IMR-90 (cell line): ENCODE measurements at regions of chr5 and their contacts with region 1.

Region 1: GRCh38 chr5:9544502-9545135 is 1.3 kb downstream of the SEMA5A start:
- DNase-seq: peak; percentile 80
- ATAC-seq: peak; percentile 48
- H3K4me3 ChIP-seq: peak overlapping the region; percentile 73
- H3K27ac ChIP-seq: peak overlapping the region; percentile 35
- H3K4me1 ChIP-seq: peaks cover 4% of the 10 kb centered on the region
- H3K27me3 ChIP-seq: no peaks in the 10 kb centered on the region
- CTCF ChIP-seq: peak; percentile 96
- POLR2A ChIP-seq: 0 out of 2 replicates have a peak, but pooled peaks have one; percentile 42
- RAD21 ChIP-seq: peak; percentile 91

Region 2: DNA sequence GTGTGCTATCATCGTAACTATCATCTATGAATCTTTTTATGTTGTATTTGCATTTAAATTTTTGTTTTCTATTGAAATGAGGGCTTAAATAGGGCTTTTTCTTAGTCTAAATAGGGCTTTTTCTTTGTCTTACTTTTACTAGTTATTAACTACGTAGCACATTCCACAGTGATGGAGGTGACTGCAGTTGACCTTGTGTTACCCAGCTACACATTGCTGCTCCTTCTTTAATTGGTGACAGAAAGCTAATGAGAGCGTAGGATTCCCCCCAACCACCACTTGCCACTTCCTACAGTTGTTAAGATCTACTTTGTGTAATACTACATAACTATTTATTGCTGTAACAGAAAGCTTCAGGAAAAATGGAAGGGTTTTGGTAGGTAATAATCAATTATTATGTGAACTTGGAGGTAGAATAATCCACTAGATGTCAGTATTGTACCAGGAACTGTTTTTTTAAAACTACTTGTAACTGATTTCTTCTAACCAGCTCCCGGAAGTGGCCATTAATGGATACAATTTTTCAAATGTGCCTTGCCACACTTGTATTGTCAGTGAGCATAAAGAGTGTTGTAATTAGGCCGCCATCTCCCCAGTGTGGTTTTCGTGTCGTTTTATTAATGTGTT is 1657.7 kb before region 1 on chr5:
- CTCF ChIA-PET with region 1: no interaction called
- POLR2A ChIA-PET with region 1: no interaction called
- dilution Hi-C with region 1: no loop called
- in situ Hi-C with region 1: loop called (anchors 25 kb)
- intact Hi-C with region 1: no loop called
- DNase-seq: peak; percentile 72
- ATAC-seq: peak; percentile 76
- H3K4me3 ChIP-seq: no peak overlapping the region
- H3K27ac ChIP-seq: peak overlapping the region; percentile 40; the same call in 1 of the 2 replicates
- H3K4me1 ChIP-seq: peaks cover 4% of the 10 kb centered on the region
- H3K27me3 ChIP-seq: no peaks in the 10 kb centered on the region
- CTCF ChIP-seq: peak; percentile 72
- POLR2A ChIP-seq: no peak
- RAD21 ChIP-seq: peak; percentile 73

Region 3: GRCh38 chr5:8756498-8757084 is 788.0 kb before region 1 on chr5:
- CTCF ChIA-PET with region 1: no interaction called
- POLR2A ChIA-PET with region 1: no interaction called
- dilution Hi-C with region 1: no loop called
- in situ Hi-C with region 1: loop called (anchors 25 kb)
- intact Hi-C with region 1: loop called (anchors 5 kb)
- DNase-seq: peak; percentile 60
- ATAC-seq: peak; percentile 63; the same call in 1 of the 2 replicates
- H3K4me3 ChIP-seq: no peak overlapping the region
- H3K27ac ChIP-seq: no peak overlapping the region
- H3K4me1 ChIP-seq: peaks cover 2% of the 10 kb centered on the region; the same call in 1 of the 2 replicates
- H3K27me3 ChIP-seq: no peaks in the 10 kb centered on the region
- CTCF ChIP-seq: peak; percentile 59
- POLR2A ChIP-seq: no peak
- RAD21 ChIP-seq: peak; percentile 81

Region 4: GRCh38 chr5:9015260-9015936 is 529.2 kb before region 1 on chr5:
- CTCF ChIA-PET with region 1: no interaction called
- POLR2A ChIA-PET with region 1: no interaction called
- dilution Hi-C with region 1: no loop called
- in situ Hi-C with region 1: no loop called
- intact Hi-C with region 1: no loop called
- DNase-seq: peak; percentile 44
- ATAC-seq: peak; percentile 54
- H3K4me3 ChIP-seq: no peak overlapping the region
- H3K27ac ChIP-seq: peak overlapping the region; percentile 9; the same call in 1 of the 2 replicates
- H3K4me1 ChIP-seq: peaks cover 17% of the 10 kb centered on the region
- H3K27me3 ChIP-seq: no peaks in the 10 kb centered on the region
- CTCF ChIP-seq: no peak
- POLR2A ChIP-seq: no peak
- RAD21 ChIP-seq: no peak

Region 5: GRCh38 chr5:9207817-9208418 is 336.7 kb before region 1 on chr5:
- CTCF ChIA-PET with region 1: no interaction called
- POLR2A ChIA-PET with region 1: no interaction called
- dilution Hi-C with region 1: no loop called
- in situ Hi-C with region 1: no loop called
- intact Hi-C with region 1: loop called (anchors 1 kb)
- DNase-seq: peak; percentile 69
- ATAC-seq: peak; percentile 86
- H3K4me3 ChIP-seq: no peak overlapping the region
- H3K27ac ChIP-seq: no peak overlapping the region
- H3K4me1 ChIP-seq: peaks cover 4% of the 10 kb centered on the region; the same call in 1 of the 2 replicates
- H3K27me3 ChIP-seq: no peaks in the 10 kb centered on the region
- CTCF ChIP-seq: peak; percentile 69
- POLR2A ChIP-seq: no peak; the same call in 1 of the 2 replicates
- RAD21 ChIP-seq: peak; percentile 87

Region 6: GRCh38 chr5:9226016-9226536 is 318.5 kb before region 1 on chr5:
- CTCF ChIA-PET with region 1: no interaction called
- POLR2A ChIA-PET with region 1: no interaction called
- dilution Hi-C with region 1: no loop called
- in situ Hi-C with region 1: no loop called
- intact Hi-C with region 1: no loop called
- DNase-seq: no peak
- ATAC-seq: no peak
- H3K4me3 ChIP-seq: no peak overlapping the region
- H3K27ac ChIP-seq: no peak overlapping the region
- H3K4me1 ChIP-seq: no peaks in the 10 kb centered on the region
- H3K27me3 ChIP-seq: no peaks in the 10 kb centered on the region
- CTCF ChIP-seq: no peak
- POLR2A ChIP-seq: no peak
- RAD21 ChIP-seq: no peak

Region 7: GRCh38 chr5:9573796-9574195 is 29.2 kb after region 1 on chr5:
- CTCF ChIA-PET with region 1: no interaction called
- POLR2A ChIA-PET with region 1: no interaction called
- dilution Hi-C with region 1: no loop called
- in situ Hi-C with region 1: no loop called
- intact Hi-C with region 1: no loop called
- DNase-seq: no peak
- ATAC-seq: no peak
- H3K4me3 ChIP-seq: no peak overlapping the region
- H3K27ac ChIP-seq: no peak overlapping the region
- H3K4me1 ChIP-seq: no peaks in the 10 kb centered on the region
- H3K27me3 ChIP-seq: no peaks in the 10 kb centered on the region
- CTCF ChIP-seq: no peak
- POLR2A ChIP-seq: no peak
- RAD21 ChIP-seq: no peak

Region 8: GRCh38 chr5:9716838-9717281 is 172.2 kb after region 1 on chr5:
- CTCF ChIA-PET with region 1: no interaction called
- POLR2A ChIA-PET with region 1: interaction called, 10 read pairs
- dilution Hi-C with region 1: no loop called
- in situ Hi-C with region 1: no loop called
- intact Hi-C with region 1: loop called (anchors 2 kb)
- DNase-seq: peak; percentile 96
- ATAC-seq: peak; percentile 67
- H3K4me3 ChIP-seq: no peak overlapping the region; the same call in 1 of the 2 replicates
- H3K27ac ChIP-seq: peak overlapping the region; percentile 46; the same call in 1 of the 2 replicates
- H3K4me1 ChIP-seq: peaks cover 26% of the 10 kb centered on the region
- H3K27me3 ChIP-seq: no peaks in the 10 kb centered on the region
- CTCF ChIP-seq: no peak
- POLR2A ChIP-seq: no peak; the same call in 1 of the 2 replicates
- RAD21 ChIP-seq: peak; percentile 25; the same call in 1 of the 2 replicates

Region 9: DNA sequence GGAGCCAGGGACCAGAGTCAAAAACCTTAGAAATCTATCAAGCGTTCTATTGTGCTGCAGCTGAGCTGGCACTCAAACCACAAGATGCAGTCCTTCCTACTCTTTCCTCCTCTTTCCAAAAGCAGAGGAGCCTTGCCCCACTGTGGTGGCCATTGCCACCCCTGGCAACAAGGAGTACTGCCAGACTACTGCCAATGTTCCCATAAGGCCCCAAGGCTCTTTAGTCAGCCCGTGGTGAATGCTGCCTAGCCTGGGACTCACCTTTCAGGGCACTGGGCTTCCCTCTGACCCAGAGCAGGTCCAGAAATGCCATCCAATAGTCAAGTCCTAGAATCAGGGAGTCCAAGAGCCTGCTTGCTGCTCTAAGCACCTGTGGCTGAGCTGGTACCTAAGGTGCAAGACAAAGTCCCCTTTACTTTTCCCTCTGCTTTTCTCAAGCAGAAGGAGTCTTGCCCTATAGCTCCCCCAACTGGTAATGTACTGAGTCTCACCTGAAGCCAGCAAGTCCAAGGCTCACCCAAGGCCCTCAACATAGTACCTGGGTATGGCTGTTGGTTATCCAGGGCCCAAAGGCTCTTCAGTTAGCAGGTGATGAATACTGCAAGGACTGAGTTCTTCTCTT is 485.7 kb after region 1 on chr5:
- CTCF ChIA-PET with region 1: interaction called, 4 read pairs
- POLR2A ChIA-PET with region 1: no interaction called
- dilution Hi-C with region 1: no loop called
- in situ Hi-C with region 1: no loop called
- intact Hi-C with region 1: loop called (anchors 1 kb)
- DNase-seq: peak; percentile 60
- ATAC-seq: peak; percentile 80
- H3K4me3 ChIP-seq: no peak overlapping the region
- H3K27ac ChIP-seq: no peak overlapping the region
- H3K4me1 ChIP-seq: no peaks in the 10 kb centered on the region; the same call in 1 of the 2 replicates
- H3K27me3 ChIP-seq: no peaks in the 10 kb centered on the region
- CTCF ChIP-seq: peak; percentile 52
- POLR2A ChIP-seq: no peak
- RAD21 ChIP-seq: peak; percentile 72